RWPE1 (cell line): ENCODE measurements at regions of chr20 and their contacts with region 1.

Region 1: GRCh38 chr20:8043687-8044282 is 24.2 kb upstream of the TMX4 start:
- DNase-seq: peak; percentile 66
- H3K27ac ChIP-seq: no peak overlapping the region
- CTCF ChIP-seq: peak; percentile 83

Region 2: GRCh38 chr20:8361006-8361652 is 317.3 kb after region 1 on chr20:
- CTCF ChIA-PET with region 1: interaction called, 10 read pairs
- POLR2A ChIA-PET with region 1: no interaction called
- DNase-seq: no peak
- H3K27ac ChIP-seq: no peak overlapping the region
- CTCF ChIP-seq: no peak